PC-3 (cell line): ENCODE measurements at regions of chr7 and their contacts with region 1.

Region 1: GRCh38 chr7:100177045-100178001 is at the starts of genes GPC2 and STAG3:
- DNase-seq: peak; percentile 93
- ATAC-seq: peak; percentile 96
- H3K4me3 ChIP-seq: peak within 1 kb of the TSS; percentile 84
- H3K27ac ChIP-seq: no peak within 1 kb of the TSS
- H3K4me1 ChIP-seq: peaks cover 6% of the 10 kb centered on the region; the same call in 1 of the 2 replicates
- H3K27me3 ChIP-seq: no peaks in the 10 kb centered on the region
- CTCF ChIP-seq: no peak
- total RNA-seq, gene GPC2: 1.6 and 2.3 TPM in 2 replicates
- total RNA-seq, gene STAG3: 0.07 and 1.2 TPM in 2 replicates

Region 2: GRCh38 chr7:99893280-99893679 is 284.0 kb before region 1 on chr7:
- CTCF ChIA-PET with region 1: no interaction called
- POLR2A ChIA-PET with region 1: no interaction called
- intact Hi-C with region 1: no loop called
- DNase-seq: no peak
- ATAC-seq: no peak
- H3K4me3 ChIP-seq: no peak overlapping the region
- H3K27ac ChIP-seq: no peak overlapping the region
- H3K4me1 ChIP-seq: no peaks in the 10 kb centered on the region
- H3K27me3 ChIP-seq: no peaks in the 10 kb centered on the region
- CTCF ChIP-seq: no peak

Region 3: GRCh38 chr7:100163006-100163531 is 14.3 kb before region 1 on chr7:
- CTCF ChIA-PET with region 1: no interaction called
- POLR2A ChIA-PET with region 1: no interaction called
- intact Hi-C with region 1: loop called (anchors 2 kb)
- DNase-seq: peak; percentile 66
- ATAC-seq: peak; percentile 64
- H3K4me3 ChIP-seq: no peak overlapping the region
- H3K27ac ChIP-seq: no peak overlapping the region
- H3K4me1 ChIP-seq: peaks cover 17% of the 10 kb centered on the region; the same call in 1 of the 2 replicates
- H3K27me3 ChIP-seq: no peaks in the 10 kb centered on the region
- CTCF ChIP-seq: no peak

Region 4: GRCh38 chr7:100208911-100209408 is 31.6 kb after region 1 on chr7:
- CTCF ChIA-PET with region 1: no interaction called
- POLR2A ChIA-PET with region 1: no interaction called
- intact Hi-C with region 1: no loop called
- DNase-seq: no peak
- ATAC-seq: no peak
- H3K4me3 ChIP-seq: no peak overlapping the region
- H3K27ac ChIP-seq: no peak overlapping the region
- H3K4me1 ChIP-seq: 0 out of 2 replicates have a peak, but pooled peaks cover 7% of the 10 kb centered on the region
- H3K27me3 ChIP-seq: no peaks in the 10 kb centered on the region
- CTCF ChIP-seq: no peak